Colonic mucosa (tissue), 4 donors: ENCODE measurements at regions of chr2 and their contacts with region 1.

Region 1: DNA sequence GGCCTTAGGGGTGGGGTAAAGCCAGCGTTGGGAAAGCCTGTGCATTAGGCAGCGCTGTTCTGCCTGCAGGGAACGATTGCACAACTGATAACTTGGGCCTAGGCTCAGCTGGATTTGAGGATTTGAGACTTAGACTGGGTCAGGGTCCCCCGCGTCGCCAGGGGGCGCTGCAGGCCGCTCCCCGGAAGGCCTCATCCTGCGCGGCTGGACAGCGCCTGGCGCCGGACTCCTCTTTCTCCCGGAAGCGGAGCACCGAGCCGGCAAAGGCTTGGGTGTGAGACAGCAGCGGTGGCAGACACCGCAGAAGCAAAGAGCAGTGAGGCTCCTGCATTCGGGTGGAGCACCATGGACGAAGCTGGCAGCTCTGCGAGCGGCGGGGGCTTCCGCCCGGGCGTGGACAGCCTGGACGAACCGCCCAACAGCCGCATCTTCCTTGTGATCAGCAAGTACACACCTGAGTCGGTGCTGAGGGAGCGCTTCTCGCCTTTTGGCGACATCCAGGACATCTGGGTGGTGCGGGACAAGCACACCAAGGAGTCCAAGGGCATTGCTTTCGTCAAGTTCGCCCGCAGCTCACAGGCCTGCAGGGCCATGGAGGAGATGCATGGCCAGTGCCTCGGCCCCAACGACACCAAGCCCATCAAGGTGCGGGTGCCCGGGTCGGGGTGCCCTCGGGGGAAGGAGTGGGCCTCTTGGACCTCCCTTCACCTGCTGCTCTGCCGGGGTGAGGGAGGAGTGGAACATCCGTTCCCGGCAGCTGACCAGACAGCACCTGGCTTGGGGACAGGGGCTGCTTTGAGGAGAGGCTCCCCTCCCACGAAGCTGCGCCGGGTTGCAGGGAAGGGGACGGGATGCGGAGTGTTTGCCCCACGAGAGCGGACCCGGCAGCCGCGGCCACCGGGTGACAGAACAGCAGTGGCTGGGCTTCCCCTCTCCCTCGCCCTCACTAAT is at the start of gene RBM45:
- DNase-seq: peak; percentile 92
- H3K4me3 ChIP-seq: peak within 1 kb of the TSS; percentile 96
- H3K27ac ChIP-seq: peak within 1 kb of the TSS; percentile 83
- H3K4me1 ChIP-seq: peaks cover 4% of the 10 kb centered on the region
- H3K27me3 ChIP-seq: no peaks in the 10 kb centered on the region
- CTCF ChIP-seq: peak; percentile 98
- total RNA-seq, gene RBM45: 12.1 to 12.7 TPM

Region 2: DNA sequence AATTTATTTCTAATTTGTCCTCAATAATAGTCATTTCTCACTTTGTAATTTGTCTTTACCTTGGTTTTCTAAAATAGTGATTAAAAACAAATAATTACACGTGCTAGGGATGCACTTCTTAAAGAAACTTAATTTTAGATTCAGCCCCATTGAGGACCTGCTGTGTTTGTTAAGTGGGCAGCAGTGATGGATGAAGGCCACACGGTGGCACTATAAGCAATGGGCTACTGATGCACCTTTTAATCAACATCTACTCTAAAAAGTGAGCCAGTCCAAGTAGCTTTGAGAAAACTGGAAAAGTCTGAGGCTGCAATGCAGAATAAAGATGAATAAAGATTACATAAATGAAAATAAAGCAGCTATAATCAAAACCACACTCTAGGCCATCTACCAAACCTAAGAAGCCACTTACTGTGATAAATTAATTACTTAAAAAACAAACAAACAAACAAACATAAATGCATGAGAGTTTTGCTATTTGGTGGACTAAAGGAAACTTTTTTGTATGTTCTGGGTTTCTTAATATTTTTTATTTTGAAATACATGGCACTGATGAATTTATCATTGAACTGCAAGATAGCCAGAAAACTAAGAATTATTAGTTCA is 129.2 kb before region 1 on chr2:
- intact Hi-C with region 1: loop called (anchors 5 kb)
- DNase-seq: peak; percentile 22
- H3K4me3 ChIP-seq: no peak overlapping the region
- H3K27ac ChIP-seq: no peak overlapping the region
- H3K4me1 ChIP-seq: no peaks in the 10 kb centered on the region
- H3K27me3 ChIP-seq: no peaks in the 10 kb centered on the region
- CTCF ChIP-seq: peak; percentile 61

Region 3: DNA sequence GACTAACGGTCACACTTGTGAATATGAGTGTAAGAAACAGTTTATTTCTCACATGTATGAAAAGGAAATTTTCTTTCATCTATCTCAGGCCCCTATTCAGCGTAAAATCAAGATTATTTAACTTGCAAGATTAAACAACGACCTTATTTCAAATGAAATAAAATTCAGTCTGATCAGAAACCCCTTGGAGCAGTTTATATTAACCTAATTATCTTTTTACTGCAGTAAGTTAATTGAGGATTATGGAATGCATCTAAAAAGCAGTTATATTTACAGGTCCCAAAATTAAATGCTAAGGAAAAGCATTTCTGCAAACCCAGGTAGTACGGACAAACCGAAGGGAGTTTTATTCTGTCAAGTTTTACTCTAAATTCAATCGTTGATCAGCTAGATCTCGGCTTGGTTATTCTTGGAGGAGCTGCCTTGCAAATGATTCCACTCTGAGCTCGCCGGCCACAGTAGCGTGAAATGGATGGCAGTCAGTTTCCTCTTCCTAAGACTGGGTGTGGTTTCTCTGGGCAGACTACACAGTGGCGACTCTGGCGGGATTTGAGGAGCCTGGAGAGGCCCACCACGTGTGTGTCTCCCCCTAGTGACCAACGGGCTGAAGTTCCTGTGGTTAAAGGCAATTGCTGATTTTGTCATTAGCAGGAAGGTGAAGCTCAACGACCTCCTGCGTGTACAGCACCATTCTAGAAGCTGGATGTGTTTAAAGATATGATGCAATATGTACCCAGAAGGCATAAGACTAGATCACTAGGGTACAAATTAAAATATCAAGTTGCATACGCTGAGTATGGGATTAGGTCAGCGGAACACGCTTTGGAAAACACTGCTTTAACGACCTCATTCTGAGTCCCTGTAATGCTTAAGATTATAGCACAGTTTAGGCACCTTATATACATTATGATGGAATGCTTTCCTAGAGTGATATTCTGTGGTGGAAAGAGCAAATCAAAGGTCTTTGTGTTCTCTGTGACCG is 302.1 kb after region 1 on chr2:
- intact Hi-C with region 1: loop called (anchors 5 kb)
- DNase-seq: peak; percentile 91
- H3K4me3 ChIP-seq: peak overlapping the region; percentile 39
- H3K27ac ChIP-seq: peak overlapping the region; percentile 56
- H3K4me1 ChIP-seq: no peaks in the 10 kb centered on the region
- H3K27me3 ChIP-seq: no peaks in the 10 kb centered on the region
- CTCF ChIP-seq: peak; percentile 83

Region 4: DNA sequence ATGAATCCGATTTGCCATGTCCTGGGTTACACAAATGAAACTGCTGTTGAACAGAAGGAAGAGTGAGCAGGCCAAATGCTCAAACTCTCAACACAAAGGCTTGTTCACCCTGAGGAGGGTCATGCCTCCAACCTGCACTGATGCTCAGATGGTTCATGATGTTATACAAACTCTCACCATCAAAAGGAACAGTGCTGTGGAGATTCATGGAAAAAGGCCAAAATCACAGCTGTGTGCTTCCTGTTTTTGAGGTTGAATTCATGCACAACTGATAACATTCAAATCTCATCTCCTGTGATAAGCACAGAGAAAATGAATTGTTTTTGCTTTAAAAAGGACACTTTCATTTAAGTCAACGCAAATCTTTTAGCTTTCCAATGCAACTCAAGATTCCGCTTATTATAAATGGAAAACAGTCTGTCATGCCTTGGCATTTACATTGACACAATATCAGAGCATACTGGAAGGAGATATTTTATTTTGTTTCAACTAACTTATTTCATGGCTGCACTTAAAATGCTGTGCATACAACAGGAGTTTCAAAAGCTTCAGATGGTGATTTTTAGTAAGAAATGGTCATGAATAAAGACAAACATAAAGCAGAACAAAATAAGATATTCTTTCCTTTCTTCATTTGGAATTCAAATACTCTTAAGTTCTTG is 717.0 kb after region 1 on chr2:
- intact Hi-C with region 1: no loop called
- DNase-seq: no peak
- H3K4me3 ChIP-seq: no peak overlapping the region
- H3K27ac ChIP-seq: no peak overlapping the region
- H3K4me1 ChIP-seq: no peaks in the 10 kb centered on the region
- H3K27me3 ChIP-seq: no peaks in the 10 kb centered on the region
- CTCF ChIP-seq: no peak